CD4-positive, alpha-beta memory T cell (primary cell): ENCODE measurements at regions of chr17 and their contacts with region 1.

Region 1: DNA sequence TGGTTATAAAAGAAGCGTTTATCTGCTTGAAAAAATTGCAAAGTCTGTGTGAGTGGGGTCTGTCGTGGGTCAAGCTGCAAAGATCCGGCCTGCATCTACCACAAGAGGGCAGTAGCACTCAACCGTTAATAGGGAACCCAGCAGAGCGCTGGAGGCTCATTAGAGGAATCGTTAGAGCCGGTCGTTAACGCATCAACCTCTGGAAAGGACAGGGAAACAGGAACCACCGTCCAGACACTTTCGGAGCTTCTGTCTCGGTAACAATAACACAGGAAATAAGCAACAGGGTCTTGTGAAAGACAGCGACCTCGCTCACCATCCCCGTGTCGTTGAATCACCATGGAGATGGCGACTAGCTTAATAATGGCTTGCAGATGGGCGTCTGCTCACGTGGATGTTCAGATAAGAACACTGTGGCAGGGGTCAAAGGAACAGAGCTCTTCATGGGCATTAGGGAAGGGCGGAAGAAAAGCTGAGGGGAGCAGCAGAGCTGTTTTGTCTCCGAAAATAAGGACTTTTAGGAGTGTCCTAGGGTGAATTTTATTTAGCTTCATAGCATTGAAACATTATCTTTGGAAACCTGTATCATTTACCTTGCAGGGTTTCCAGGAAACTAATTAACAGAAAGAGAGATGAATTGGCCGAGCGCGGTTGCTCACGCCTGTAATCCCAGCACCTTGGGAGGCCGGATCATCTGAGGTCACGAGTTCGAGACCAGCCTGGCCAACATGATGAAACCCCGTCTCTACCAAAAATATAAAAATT is 11.9 kb upstream of the NSRP1 start:
- DNase-seq: peak; percentile 57 to 69 (median 64)
- H3K4me3 ChIP-seq: peak overlapping the region; percentile 32 to 50
- H3K4me3 Mint-ChIP-seq: peak overlapping the region; percentile 81 to 89 (median 84)
- H3K27ac ChIP-seq: no peak overlapping the region
- H3K27ac Mint-ChIP-seq: peak overlapping the region in 5 of 7 donors; percentile 0 to 74 (median 65)
- H3K4me1 ChIP-seq: peaks cover 15% of the 10 kb centered on the region
- H3K4me1 Mint-ChIP-seq: peaks cover 5 to 7% (median 5%) of the 10 kb centered on the region in 4 donors
- H3K27me3 ChIP-seq: no peaks in the 10 kb centered on the region
- H3K27me3 Mint-ChIP-seq: peaks cover 2 to 4% of the 10 kb centered on the region in 2 donors

Region 2: GRCh38 chr17:29962656-29963055 is 142.1 kb before region 1 on chr17:
- CTCF ChIA-PET with region 1: no interaction called
- POLR2A ChIA-PET with region 1: no interaction called
- intact Hi-C with region 1: no loop called
- DNase-seq: no peak
- H3K4me3 ChIP-seq: no peak overlapping the region
- H3K4me3 Mint-ChIP-seq: no peak overlapping the region
- H3K27ac ChIP-seq: no peak overlapping the region
- H3K27ac Mint-ChIP-seq: no peak overlapping the region
- H3K4me1 ChIP-seq: no peaks in the 10 kb centered on the region
- H3K4me1 Mint-ChIP-seq: no peaks in the 10 kb centered on the region
- H3K27me3 ChIP-seq: no peaks in the 10 kb centered on the region
- H3K27me3 Mint-ChIP-seq: no peaks in the 10 kb centered on the region

Region 3: GRCh38 chr17:30093463-30094147 is 11.2 kb before region 1 on chr17:
- CTCF ChIA-PET with region 1: interaction called, 77 read pairs
- POLR2A ChIA-PET with region 1: no interaction called
- intact Hi-C with region 1: no loop called
- DNase-seq: peak; percentile 41 to 66 (median 52)
- H3K4me3 ChIP-seq: no peak overlapping the region
- H3K4me3 Mint-ChIP-seq: peak overlapping the region in 1 of 8 donors; percentile 24
- H3K27ac ChIP-seq: no peak overlapping the region
- H3K27ac Mint-ChIP-seq: no peak overlapping the region
- H3K4me1 ChIP-seq: peaks cover 6% of the 10 kb centered on the region
- H3K4me1 Mint-ChIP-seq: peaks cover 0 to 8% (median 3%) of the 10 kb centered on the region in 4 donors
- H3K27me3 ChIP-seq: no peaks in the 10 kb centered on the region
- H3K27me3 Mint-ChIP-seq: peaks cover 15 to 29% of the 10 kb centered on the region in 2 donors

Region 4: GRCh38 chr17:30124273-30124796 is 19.6 kb after region 1 on chr17:
- CTCF ChIA-PET with region 1: interaction called, 101 read pairs
- POLR2A ChIA-PET with region 1: interaction called, 3 read pairs
- intact Hi-C with region 1: loop called (anchors 1 kb)
- DNase-seq: no peak
- H3K4me3 ChIP-seq: no peak overlapping the region
- H3K4me3 Mint-ChIP-seq: no peak overlapping the region
- H3K27ac ChIP-seq: no peak overlapping the region
- H3K27ac Mint-ChIP-seq: peak overlapping the region in 3 of 7 donors; percentile 10 to 83 (median 53)
- H3K4me1 ChIP-seq: peaks cover 20% of the 10 kb centered on the region
- H3K4me1 Mint-ChIP-seq: peaks cover 24 to 47% (median 34%) of the 10 kb centered on the region in 4 donors
- H3K27me3 ChIP-seq: no peaks in the 10 kb centered on the region
- H3K27me3 Mint-ChIP-seq: no peaks in the 10 kb centered on the region

Region 5: DNA sequence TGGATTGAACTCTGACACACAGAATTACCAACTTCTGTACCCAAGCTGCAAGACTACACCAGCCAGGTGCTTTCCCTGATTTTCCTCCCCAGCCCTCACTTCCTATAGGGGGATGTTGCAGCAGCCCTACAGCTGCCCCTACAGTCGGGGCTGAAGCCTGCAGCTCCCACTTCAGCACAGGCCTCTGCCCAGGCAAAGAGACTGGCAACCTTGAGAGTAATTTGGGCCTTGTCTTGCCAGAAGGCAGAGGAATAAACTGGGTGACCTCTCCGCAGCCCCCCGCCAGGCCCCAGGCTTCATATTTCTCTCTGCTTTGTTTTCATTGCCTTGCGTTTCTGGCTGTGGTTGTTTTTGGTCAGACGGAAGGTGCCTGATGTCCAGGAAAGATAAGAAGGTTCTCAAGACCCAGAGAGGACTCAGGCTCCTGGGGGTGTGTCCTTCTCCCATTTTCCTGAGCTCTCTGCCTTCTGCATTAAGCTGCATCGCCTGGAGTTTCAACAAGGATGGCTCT is 98.8 kb after region 1 on chr17:
- CTCF ChIA-PET with region 1: no interaction called
- POLR2A ChIA-PET with region 1: no interaction called
- intact Hi-C with region 1: no loop called
- DNase-seq: no peak
- H3K4me3 ChIP-seq: no peak overlapping the region
- H3K4me3 Mint-ChIP-seq: no peak overlapping the region
- H3K27ac ChIP-seq: no peak overlapping the region
- H3K27ac Mint-ChIP-seq: no peak overlapping the region
- H3K4me1 ChIP-seq: no peaks in the 10 kb centered on the region
- H3K4me1 Mint-ChIP-seq: no peaks in the 10 kb centered on the region
- H3K27me3 ChIP-seq: no peaks in the 10 kb centered on the region
- H3K27me3 Mint-ChIP-seq: peaks cover 8 to 19% of the 10 kb centered on the region in 2 donors

Region 6: GRCh38 chr17:30278032-30278431 is 173.3 kb after region 1 on chr17:
- CTCF ChIA-PET with region 1: interaction called, 8 read pairs
- POLR2A ChIA-PET with region 1: no interaction called
- intact Hi-C with region 1: loop called (anchors 1 kb)
- DNase-seq: peak in 1 of 5 donors; percentile 2
- H3K4me3 ChIP-seq: no peak overlapping the region
- H3K4me3 Mint-ChIP-seq: no peak overlapping the region
- H3K27ac ChIP-seq: no peak overlapping the region
- H3K27ac Mint-ChIP-seq: no peak overlapping the region
- H3K4me1 ChIP-seq: no peaks in the 10 kb centered on the region
- H3K4me1 Mint-ChIP-seq: peaks cover 0 to 11% (median 1%) of the 10 kb centered on the region in 4 donors
- H3K27me3 ChIP-seq: no peaks in the 10 kb centered on the region
- H3K27me3 Mint-ChIP-seq: no peaks in the 10 kb centered on the region

Region 7: DNA sequence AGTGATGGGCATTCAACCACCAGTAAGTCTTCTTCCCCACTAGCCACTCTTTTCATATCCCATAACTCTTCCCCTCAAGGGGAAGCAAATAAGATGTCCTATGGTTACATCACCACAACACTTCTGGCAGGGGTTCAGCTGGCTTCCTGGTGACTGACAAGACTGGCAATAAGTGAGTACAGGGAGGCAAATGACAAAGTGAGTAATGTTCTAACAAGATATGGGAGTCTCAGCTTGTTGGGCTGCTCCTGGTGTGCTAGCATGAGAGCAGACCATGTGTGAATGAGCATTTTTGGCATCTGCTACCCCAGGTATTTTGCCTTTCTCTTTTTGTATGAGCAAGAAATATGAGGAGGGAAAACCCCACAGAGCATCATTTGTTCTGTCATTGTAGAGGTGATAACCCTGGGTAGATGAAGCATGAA is 219.2 kb after region 1 on chr17:
- CTCF ChIA-PET with region 1: interaction called, 15 read pairs
- POLR2A ChIA-PET with region 1: interaction called, 6 read pairs
- intact Hi-C with region 1: no loop called
- DNase-seq: peak; percentile 34 to 71 (median 48)
- H3K4me3 ChIP-seq: peak overlapping the region; percentile 9 to 14
- H3K4me3 Mint-ChIP-seq: peak overlapping the region; percentile 62 to 80 (median 70)
- H3K27ac ChIP-seq: peak overlapping the region; percentile 45
- H3K27ac Mint-ChIP-seq: peak overlapping the region; percentile 82 to 96 (median 93)
- H3K4me1 ChIP-seq: peaks cover 48% of the 10 kb centered on the region
- H3K4me1 Mint-ChIP-seq: peaks cover 36 to 54% (median 41%) of the 10 kb centered on the region in 4 donors
- H3K27me3 ChIP-seq: no peaks in the 10 kb centered on the region
- H3K27me3 Mint-ChIP-seq: no peaks in the 10 kb centered on the region

Region 8: GRCh38 chr17:30344283-30345088 is 239.7 kb after region 1 on chr17:
- CTCF ChIA-PET with region 1: interaction called, 160 read pairs
- POLR2A ChIA-PET with region 1: interaction called, 5 read pairs
- intact Hi-C with region 1: loop called (anchors 1 kb)
- DNase-seq: no peak
- H3K4me3 ChIP-seq: no peak overlapping the region
- H3K4me3 Mint-ChIP-seq: no peak overlapping the region
- H3K27ac ChIP-seq: no peak overlapping the region
- H3K27ac Mint-ChIP-seq: peak overlapping the region in 1 of 7 donors; percentile 4
- H3K4me1 ChIP-seq: peaks cover 9% of the 10 kb centered on the region
- H3K4me1 Mint-ChIP-seq: peaks cover 6 to 9% (median 7%) of the 10 kb centered on the region in 4 donors
- H3K27me3 ChIP-seq: no peaks in the 10 kb centered on the region
- H3K27me3 Mint-ChIP-seq: no peaks in the 10 kb centered on the region